ENCODE measurements at regions of chr6 and their contacts with region 1.

Region 1: GRCh38 chr6:38427492-38428210 is 212.1 kb downstream of the BTBD9 start:
- DNase-seq: no peak
- ATAC-seq: no peak
- H3K4me3 ChIP-seq: no peak overlapping the region
- H3K27ac ChIP-seq: no peak overlapping the region
- H3K4me1 ChIP-seq: 0 out of 2 replicates have a peak, but pooled peaks cover 6% of the 10 kb centered on the region
- H3K27me3 ChIP-seq: no peaks in the 10 kb centered on the region
- CTCF ChIP-seq: no peak

Region 2: DNA sequence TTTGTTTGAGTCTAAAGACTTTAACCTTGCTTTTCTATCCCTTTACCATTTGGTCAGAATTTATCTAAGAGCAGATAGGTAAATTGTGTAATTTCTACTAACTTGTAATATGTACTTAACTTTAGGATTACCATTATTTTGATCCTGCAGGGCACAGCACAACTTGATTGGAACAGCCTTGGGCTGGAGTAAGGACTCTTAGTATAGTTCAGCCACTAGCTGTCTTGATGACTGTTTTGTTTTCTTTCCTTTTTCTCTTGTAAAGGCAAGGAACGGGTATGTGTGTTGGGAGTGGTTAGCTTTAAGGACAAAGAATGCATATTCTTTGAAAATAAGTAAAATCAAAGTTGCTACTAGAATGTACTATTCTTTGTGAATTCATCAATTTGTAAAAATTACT is 405.0 kb before region 1 on chr6:
- CTCF ChIA-PET with region 1: no interaction called
- POLR2A ChIA-PET with region 1: interaction called, 17 read pairs
- intact Hi-C with region 1: no loop called
- DNase-seq: no peak
- ATAC-seq: no peak
- H3K4me3 ChIP-seq: no peak overlapping the region
- H3K27ac ChIP-seq: no peak overlapping the region
- H3K4me1 ChIP-seq: no peaks in the 10 kb centered on the region
- H3K27me3 ChIP-seq: no peaks in the 10 kb centered on the region
- CTCF ChIP-seq: no peak